Body of pancreas (tissue), 4 donors: ENCODE measurements at regions of chr12 and their contacts with region 1.

Region 1: DNA sequence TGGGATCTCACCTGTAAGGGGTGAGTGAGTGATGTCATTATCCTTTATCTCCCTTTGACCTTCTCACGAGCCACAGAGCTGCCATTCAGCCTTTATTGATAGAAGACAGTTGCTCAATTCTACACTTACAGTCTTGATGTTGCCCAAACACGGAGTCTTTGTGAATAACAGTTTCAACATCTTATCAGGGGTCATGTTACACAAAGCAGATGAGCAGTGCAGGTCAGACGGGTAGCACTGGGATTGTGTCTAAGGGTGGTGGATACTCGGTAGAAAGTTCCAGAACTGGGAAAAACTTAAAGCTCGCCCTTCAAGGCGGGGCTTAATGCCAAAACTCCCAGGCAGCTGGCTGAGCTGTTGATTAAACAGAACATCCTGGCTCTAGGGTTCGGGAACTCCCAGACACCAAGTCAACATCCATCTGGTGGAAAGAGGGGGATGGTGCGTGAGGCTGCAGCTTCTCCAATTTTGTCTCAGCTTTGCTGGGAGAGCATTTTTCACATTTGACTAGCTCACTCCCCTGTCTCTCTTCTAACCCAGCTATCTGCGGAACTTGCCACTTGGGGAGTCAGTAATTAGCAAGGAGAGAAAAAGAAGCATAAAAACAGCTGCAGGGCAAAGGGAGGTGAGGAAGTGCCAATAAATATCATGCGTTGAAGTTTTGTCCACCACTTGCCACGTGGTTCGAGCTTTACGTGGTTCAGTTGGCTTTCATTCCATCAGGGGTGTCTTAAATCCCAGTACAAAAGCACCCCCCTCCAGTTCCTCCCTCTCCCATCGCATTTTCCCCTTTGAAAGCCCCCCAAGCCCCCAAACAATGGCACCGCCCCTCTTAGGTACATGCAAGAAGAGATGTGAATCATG is 31.0 kb downstream of the FOXN4 start:
- DNase-seq: peak in 1 of 4 donors; percentile 15
- ATAC-seq: no peak
- H3K4me3 ChIP-seq: no peak overlapping the region
- H3K27ac ChIP-seq: no peak overlapping the region
- H3K4me1 ChIP-seq: no peaks in the 10 kb centered on the region
- H3K27me3 ChIP-seq: no peaks in the 10 kb centered on the region
- CTCF ChIP-seq: no peak
- POLR2A ChIP-seq: no peak

Region 2: DNA sequence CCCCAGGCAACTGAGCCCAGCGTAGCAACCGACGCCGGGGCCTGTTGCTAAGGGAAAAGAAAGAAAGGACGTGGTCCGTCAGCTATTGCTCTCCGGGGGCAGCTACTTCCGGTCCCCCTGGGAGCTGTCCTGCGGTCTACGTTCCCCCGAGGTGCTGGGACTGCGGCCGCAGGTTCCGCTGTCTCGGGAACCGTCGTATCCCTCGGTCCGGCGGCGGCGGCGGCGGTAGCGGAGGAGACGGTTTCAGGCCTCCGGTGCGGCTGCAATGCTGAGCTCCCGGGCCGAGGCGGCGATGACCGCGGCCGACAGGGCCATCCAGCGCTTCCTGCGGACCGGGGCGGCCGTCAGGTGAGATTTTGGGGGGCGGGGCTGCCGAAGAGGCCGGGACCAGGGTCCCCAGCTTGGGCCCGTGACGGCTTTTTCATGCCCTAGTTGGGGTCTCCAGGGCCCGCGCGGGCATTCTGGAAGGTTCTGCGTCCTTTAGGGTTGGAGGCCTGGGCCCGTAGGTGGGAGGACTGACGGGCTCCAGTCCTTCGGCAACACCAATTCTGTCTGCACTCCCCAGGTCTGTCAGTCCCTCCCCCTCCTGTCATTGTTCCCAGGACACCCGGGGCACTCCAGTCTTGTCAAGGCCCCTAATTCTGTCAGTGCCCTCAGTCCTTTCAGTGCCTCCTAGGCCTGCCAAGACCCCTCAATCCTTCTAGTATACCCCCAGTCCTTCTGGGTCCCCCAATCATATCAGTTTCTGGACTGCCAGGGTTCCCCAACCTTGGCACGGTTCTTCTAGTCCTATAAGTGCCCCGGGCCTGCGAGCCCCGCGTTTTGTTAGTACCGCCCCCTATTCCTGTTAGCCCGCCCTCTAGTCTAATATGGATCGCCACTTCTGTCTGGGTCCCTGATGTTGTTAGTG is 225.5 kb before region 1 on chr12 and contains the start of gene USP30:
- intact Hi-C with region 1: no loop called
- DNase-seq: peak; percentile 87 to 89 (median 88)
- ATAC-seq: peak; percentile 98
- H3K4me3 ChIP-seq: peak within 1 kb of the TSS; percentile 58 to 99
- H3K27ac ChIP-seq: peak within 1 kb of the TSS; percentile 61 to 92 (median 78)
- H3K4me1 ChIP-seq: peaks cover 21% of the 10 kb centered on the region
- H3K27me3 ChIP-seq: no peaks in the 10 kb centered on the region
- CTCF ChIP-seq: peak in 1 of 7 experiments; percentile 12
- POLR2A ChIP-seq: peak; percentile 13 to 62 (median 58)
- total RNA-seq, gene USP30: 7.3 to 14.5 TPM

Region 3: GRCh38 chr12:109134186-109134917 is 143.8 kb before region 1 on chr12:
- intact Hi-C with region 1: no loop called
- DNase-seq: peak; percentile 48 to 63 (median 58)
- ATAC-seq: peak; percentile 43
- H3K4me3 ChIP-seq: no peak overlapping the region
- H3K27ac ChIP-seq: peak overlapping the region in 2 of 4 donors; percentile 10 to 19
- H3K4me1 ChIP-seq: peaks cover 52% of the 10 kb centered on the region
- H3K27me3 ChIP-seq: no peaks in the 10 kb centered on the region
- CTCF ChIP-seq: peak; percentile 30 to 61 (median 50)
- POLR2A ChIP-seq: no peak

Region 4: GRCh38 chr12:109385339-109386067 is 107.4 kb after region 1 on chr12:
- intact Hi-C with region 1: loop called (anchors 10 kb)
- DNase-seq: no peak
- ATAC-seq: no peak
- H3K4me3 ChIP-seq: no peak overlapping the region
- H3K27ac ChIP-seq: no peak overlapping the region
- H3K4me1 ChIP-seq: peaks cover 3% of the 10 kb centered on the region
- H3K27me3 ChIP-seq: no peaks in the 10 kb centered on the region
- CTCF ChIP-seq: peak in 5 of 7 experiments; percentile 27 to 47 (median 45)
- POLR2A ChIP-seq: no peak